ENCODE measurements at regions of chr15 and their contacts with region 1.

Region 1: DNA sequence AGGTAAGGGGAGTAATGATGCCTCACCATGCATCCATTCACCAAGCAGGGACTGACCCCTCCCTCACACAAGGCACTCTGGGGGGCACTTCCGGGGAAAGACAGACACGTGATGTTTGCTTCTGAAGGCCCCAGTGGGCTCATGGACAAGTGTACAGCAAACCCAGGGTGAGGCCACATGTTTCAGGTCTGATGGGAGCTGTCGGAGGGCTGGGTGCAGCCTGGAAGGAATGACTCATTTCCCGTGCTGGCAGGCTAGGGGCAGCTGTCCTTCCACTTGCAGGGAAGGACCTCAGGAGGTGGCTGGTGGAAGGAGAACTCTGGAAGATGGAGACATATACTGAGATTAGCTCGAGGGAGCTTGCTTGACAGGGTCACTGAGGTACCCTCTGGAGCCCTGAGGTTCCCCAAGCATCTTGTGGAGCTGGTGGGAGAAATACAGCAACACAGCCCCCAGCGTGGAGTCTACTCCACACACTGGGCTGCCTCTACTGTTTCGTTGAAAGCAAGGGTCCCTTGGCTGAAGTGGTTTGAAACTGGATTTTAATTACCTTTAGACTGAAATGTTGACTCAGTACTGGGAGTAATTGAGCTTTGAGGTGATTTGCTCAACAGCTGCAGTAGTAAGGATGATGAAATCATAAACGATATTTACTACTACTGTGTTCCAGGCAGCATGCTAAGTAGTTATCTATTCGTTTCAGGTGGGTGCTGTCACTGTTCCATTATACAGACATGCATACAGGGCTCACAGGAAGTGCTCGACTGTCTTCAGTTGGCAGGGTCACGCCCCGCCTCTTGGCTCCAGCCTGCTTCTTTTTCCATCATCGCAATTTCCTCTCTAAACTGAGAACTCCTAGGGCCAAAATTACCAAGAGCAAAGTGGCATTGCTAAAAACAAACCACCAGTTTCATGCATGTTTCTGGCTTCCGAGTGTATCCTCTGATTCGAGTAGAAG is 230.4 kb downstream of the ADAMTS17 start:
- DNase-seq: peak; percentile 83
- H3K4me3 ChIP-seq: no peak overlapping the region
- H3K27ac ChIP-seq: peak overlapping the region; percentile 56
- H3K4me1 ChIP-seq: peaks cover 31% of the 10 kb centered on the region
- H3K27me3 ChIP-seq: no peaks in the 10 kb centered on the region
- CTCF ChIP-seq: no peak
- POLR2A ChIP-seq: no peak

Region 2: DNA sequence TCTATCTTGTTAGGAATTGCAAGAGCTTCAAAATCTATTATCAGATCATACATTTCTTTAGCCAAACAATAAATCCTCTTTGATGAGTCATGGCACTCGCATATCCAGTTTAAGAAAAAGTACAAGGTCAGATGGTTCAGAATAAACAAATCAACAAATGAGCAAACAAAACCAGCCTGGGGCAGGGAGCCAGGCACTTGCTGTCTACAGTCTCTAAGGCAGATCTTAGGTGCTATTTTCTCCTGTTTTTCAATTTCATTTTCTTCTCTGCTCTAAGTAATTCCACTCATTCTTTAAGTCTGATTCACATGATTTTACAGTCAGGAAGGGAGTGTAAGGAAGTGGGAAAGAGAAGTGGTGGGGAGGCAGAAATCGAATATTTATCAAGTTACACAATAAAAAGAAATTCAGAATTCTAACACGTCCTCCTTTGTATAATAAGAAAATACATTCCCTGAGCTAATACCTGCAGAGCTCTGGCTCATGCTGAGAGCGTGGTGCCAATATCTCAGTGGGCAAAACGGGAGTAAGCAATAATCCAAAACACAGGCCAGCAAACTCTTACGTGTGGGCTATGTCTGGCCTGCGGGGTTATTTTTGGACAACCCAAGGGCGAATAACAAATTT is 68.3 kb before region 1 on chr15:
- CTCF ChIA-PET with region 1: interaction called, 3 read pairs
- POLR2A ChIA-PET with region 1: no interaction called
- dilution Hi-C with region 1: no loop called
- intact Hi-C with region 1: loop called (anchors 1 kb)
- DNase-seq: peak; percentile 71
- H3K4me3 ChIP-seq: peak overlapping the region in 1 of 3 experiments; percentile 22
- H3K27ac ChIP-seq: peak overlapping the region; percentile 72
- H3K4me1 ChIP-seq: peaks cover 18% of the 10 kb centered on the region
- H3K27me3 ChIP-seq: no peaks in the 10 kb centered on the region
- CTCF ChIP-seq: no peak
- POLR2A ChIP-seq: no peak

Region 3: GRCh38 chr15:100131321-100132224 is 20.2 kb after region 1 on chr15:
- CTCF ChIA-PET with region 1: interaction called, 12 read pairs
- POLR2A ChIA-PET with region 1: no interaction called
- dilution Hi-C with region 1: no loop called
- intact Hi-C with region 1: loop called (anchors 1 kb)
- DNase-seq: peak; percentile 25
- H3K4me3 ChIP-seq: peak overlapping the region in 1 of 3 experiments; percentile 16
- H3K27ac ChIP-seq: no peak overlapping the region
- H3K4me1 ChIP-seq: no peaks in the 10 kb centered on the region
- H3K27me3 ChIP-seq: no peaks in the 10 kb centered on the region
- CTCF ChIP-seq: peak; percentile 34 to 52
- POLR2A ChIP-seq: no peak

Region 4: DNA sequence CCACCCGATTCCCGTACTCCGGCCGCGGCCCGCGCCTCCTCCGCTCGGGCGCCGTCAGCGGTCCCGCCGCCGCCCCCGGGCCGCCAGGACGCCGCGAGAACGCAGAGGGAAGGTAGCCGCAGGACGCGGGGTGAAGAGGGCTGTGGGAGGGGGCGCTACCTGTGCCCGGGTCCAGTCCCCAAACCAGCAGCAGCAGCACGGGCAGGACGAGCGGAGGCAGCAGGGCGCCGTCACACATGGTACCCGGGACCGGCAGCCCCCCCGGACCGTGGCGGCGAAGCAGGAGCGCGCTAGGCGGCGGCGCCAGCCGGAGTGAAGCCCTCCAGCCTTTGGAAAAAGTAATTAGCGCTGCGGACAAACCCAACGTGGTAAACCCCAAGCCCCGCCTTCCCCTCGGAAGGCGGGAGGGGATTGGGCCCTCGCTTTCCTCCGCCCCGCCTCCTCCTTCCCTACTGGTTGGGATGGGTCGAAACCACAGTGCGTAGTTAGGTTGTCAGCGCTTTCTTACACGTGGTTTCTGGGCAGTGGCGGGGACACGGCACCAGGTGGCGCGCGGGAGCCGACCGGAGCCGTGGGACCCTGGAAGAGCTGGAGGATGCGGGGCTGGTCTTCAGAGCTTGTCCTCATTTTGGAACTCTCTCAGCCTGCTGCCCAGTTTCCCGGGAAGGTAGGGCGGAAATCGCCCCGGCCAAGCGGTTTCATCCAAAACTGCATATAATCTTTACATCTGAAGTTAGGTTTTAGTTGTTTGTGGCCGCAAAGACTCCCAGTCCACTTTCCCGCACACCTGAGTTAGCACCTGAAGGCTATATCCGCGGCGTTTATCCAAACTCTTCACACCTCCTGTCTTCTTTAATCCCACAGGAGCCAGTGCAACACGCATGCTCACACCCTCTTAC is 230.5 kb after region 1 on chr15 and contains the start of gene ADAMTS17:
- CTCF ChIA-PET with region 1: interaction called, 4 read pairs
- POLR2A ChIA-PET with region 1: no interaction called
- dilution Hi-C with region 1: no loop called
- intact Hi-C with region 1: loop called (anchors 2 kb)
- DNase-seq: peak; percentile 92
- H3K4me3 ChIP-seq: peak within 1 kb of the TSS; percentile 16 to 36 (median 35)
- H3K27ac ChIP-seq: no peak within 1 kb of the TSS
- H3K4me1 ChIP-seq: peaks cover 4% of the 10 kb centered on the region
- H3K27me3 ChIP-seq: peaks cover 2 to 12% of the 10 kb centered on the region in 2 experiments
- CTCF ChIP-seq: peak; percentile 79 to 91
- POLR2A ChIP-seq: no peak
- total RNA-seq, gene ADAMTS17: not detected in 2 replicates

Region 5: DNA sequence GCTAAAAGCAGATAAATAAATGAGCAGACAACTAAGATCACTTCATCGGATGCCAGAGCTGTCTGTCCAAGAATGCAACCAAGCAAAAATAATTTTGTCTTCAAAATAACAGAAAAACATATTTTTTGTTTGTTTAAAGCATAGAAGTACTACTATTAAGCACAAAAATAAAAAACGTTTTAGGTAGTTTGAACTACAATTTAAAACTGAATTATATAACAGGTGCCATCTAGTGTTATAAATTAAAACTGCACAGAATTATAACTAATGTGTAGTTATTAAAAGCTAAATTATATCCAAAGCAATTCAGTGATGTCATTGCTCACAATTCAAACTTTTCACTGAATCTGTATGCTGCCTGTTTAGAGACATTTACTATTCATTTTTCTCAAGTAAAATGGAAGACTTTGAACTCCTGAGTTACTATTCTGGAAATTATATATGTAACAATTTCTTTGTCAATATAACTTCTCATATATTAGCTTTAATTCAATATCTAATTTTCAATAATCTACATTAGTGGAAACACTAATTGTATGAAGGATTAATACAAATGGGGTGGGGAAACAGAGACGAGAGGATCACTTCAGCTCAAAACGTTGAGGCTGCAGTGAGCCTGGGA is 461.1 kb after region 1 on chr15:
- CTCF ChIA-PET with region 1: no interaction called
- POLR2A ChIA-PET with region 1: no interaction called
- dilution Hi-C with region 1: no loop called
- intact Hi-C with region 1: no loop called
- DNase-seq: peak; percentile 16
- H3K4me3 ChIP-seq: no peak overlapping the region
- H3K27ac ChIP-seq: no peak overlapping the region
- H3K4me1 ChIP-seq: no peaks in the 10 kb centered on the region
- H3K27me3 ChIP-seq: no peaks in the 10 kb centered on the region
- CTCF ChIP-seq: peak; percentile 4 to 26
- POLR2A ChIP-seq: no peak

Region 6: GRCh38 chr15:100602064-100602822 is 490.9 kb after region 1 on chr15 and contains the starts of genes ASB7 and LINS1:
- CTCF ChIA-PET with region 1: no interaction called
- POLR2A ChIA-PET with region 1: no interaction called
- dilution Hi-C with region 1: no loop called
- intact Hi-C with region 1: loop called (anchors 5 kb)
- DNase-seq: peak; percentile 100
- H3K4me3 ChIP-seq: peak within 1 kb of the TSS; percentile 84 to 99 (median 96)
- H3K27ac ChIP-seq: peak within 1 kb of the TSS; percentile 71
- H3K4me1 ChIP-seq: peaks cover 21% of the 10 kb centered on the region
- H3K27me3 ChIP-seq: no peaks in the 10 kb centered on the region
- CTCF ChIP-seq: no peak
- POLR2A ChIP-seq: no peak
- total RNA-seq, gene ASB7: 13.0 and 13.3 TPM in 2 replicates
- total RNA-seq, gene LINS1: 9.6 and 14.7 TPM in 2 replicates